CD8-positive, alpha-beta T cell (primary cell): ENCODE measurements at regions of chr2 and their contacts with region 1.

Region 1: DNA sequence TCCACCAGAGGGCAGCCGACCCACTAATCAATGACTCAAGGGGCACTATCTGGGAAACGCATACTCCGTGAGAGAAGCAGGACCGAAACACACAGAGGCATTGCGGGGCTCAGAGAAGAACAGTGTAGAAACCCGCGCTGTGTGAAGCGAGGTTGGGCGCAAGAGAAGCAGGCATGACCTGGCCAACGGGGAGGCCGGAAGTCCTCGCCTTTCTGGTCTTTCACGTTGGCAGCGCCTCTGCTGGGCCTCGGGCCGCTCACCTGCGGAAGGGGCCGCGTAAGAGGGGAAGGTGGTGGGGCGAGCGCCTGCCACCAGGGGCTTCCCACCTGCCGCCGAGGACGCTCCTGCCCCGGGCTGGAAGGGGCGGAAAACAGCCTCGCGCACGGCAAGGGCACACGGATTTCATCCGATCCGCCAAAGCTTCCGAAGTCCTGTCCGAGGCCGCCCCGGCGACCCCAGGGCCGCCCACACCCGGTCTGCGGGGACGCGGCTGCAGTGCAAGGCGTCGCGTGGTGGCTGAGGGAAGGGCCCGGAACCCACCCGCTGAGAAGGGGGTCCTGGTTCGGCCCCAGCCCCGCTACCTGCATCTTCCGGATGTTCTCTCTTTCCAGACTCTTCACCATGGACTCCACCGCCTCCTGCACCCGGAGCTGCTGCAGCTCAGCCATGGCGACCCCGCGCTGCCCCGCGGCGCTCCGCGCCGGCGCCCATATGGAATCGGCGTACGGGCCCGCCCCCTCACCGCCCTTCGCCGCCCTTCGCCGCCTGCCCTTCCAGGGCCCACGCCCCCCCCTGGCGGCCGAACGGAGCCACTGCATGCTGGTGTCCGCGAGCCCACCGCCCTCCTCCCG is at the start of gene FAM136A:
- DNase-seq: peak; percentile 78 to 93 (median 88)
- ATAC-seq: peak; percentile 93
- H3K4me3 ChIP-seq: peak within 1 kb of the TSS; percentile 85 to 94
- H3K4me3 Mint-ChIP-seq: peak within 1 kb of the TSS; percentile 89
- H3K27ac ChIP-seq: peak within 1 kb of the TSS; percentile 77 to 80
- H3K27ac Mint-ChIP-seq: peak within 1 kb of the TSS; percentile 93
- H3K4me1 ChIP-seq: peaks cover 16% of the 10 kb centered on the region
- H3K4me1 Mint-ChIP-seq: peaks cover 29% of the 10 kb centered on the region
- H3K27me3 ChIP-seq: no peaks in the 10 kb centered on the region
- H3K27me3 Mint-ChIP-seq: no peaks in the 10 kb centered on the region
- CTCF ChIP-seq: peak; percentile 87
- total RNA-seq, gene FAM136A: 30.8 to 30.9 TPM

Region 2: DNA sequence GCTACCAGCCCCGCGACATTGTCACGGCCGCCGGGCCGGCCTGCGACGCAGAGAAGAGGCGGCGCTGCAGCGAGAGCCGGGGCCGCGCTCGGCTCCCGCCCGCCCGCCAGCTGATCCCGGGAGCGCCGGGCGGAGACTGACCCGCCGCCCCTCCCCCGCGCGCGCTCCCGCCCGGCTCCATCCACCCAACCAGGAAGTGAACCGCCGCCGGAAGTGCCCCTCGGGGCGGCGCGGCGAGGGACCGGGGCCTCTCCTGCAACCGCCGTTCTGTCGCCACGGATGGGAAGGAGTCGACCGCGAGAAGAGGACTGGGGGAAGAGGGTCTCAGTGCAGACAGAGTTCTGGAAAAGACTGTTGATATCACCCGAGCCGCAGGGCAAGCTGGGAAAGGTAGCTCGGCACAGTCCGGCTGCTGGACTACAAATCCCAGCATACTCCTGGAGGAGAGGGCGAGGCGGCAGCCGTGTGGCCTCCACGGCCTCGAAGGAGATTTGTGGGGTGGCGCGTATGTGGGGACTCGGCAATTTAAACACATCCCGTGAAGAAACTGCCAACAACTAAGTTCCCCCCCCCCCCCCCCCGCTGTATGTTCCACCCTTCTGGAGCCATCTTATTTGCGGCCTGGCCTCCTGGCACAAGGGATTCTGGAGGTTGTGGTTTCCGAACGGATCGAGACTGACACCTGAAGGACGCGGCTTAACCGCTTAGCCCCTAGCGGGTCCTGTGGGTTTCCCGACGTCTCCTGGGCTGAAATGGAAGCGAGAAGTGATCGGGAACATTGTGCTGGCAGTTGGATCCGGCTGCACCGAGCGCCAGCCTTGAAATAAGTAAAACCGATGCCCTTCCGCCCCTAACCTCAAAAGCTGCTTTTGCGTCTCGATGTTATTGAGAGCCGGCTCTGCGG is 657.7 kb before region 1 on chr2 and contains the start of gene AAK1:
- CTCF ChIA-PET with region 1: no interaction called
- POLR2A ChIA-PET with region 1: no interaction called
- intact Hi-C with region 1: loop called in 1 of 2 experiments (anchors 10 kb)
- DNase-seq: peak; percentile 60 to 92 (median 83)
- ATAC-seq: peak; percentile 41
- H3K4me3 ChIP-seq: peak within 1 kb of the TSS; percentile 83 to 95
- H3K4me3 Mint-ChIP-seq: peak within 1 kb of the TSS; percentile 96
- H3K27ac ChIP-seq: peak within 1 kb of the TSS; percentile 58 to 86
- H3K27ac Mint-ChIP-seq: peak within 1 kb of the TSS; percentile 97
- H3K4me1 ChIP-seq: peaks cover 54% of the 10 kb centered on the region
- H3K4me1 Mint-ChIP-seq: peaks cover 65% of the 10 kb centered on the region
- H3K27me3 ChIP-seq: no peaks in the 10 kb centered on the region
- H3K27me3 Mint-ChIP-seq: no peaks in the 10 kb centered on the region
- CTCF ChIP-seq: no peak
- total RNA-seq, gene AAK1: 156 to 174 TPM

Region 3: GRCh38 chr2:69914170-69914960 is 387.2 kb before region 1 on chr2:
- CTCF ChIA-PET with region 1: interaction called, 75 read pairs
- POLR2A ChIA-PET with region 1: interaction called, 5 read pairs
- intact Hi-C with region 1: loop called (anchors 1 kb)
- DNase-seq: peak in 7 of 9 experiments; percentile 99 to 100 (median 100)
- ATAC-seq: peak; percentile 93
- H3K4me3 ChIP-seq: peak overlapping the region; percentile 87 to 89
- H3K4me3 Mint-ChIP-seq: peak overlapping the region; percentile 85
- H3K27ac ChIP-seq: peak overlapping the region; percentile 91 to 97
- H3K27ac Mint-ChIP-seq: peak overlapping the region; percentile 92
- H3K4me1 ChIP-seq: peaks cover 21% of the 10 kb centered on the region
- H3K4me1 Mint-ChIP-seq: peaks cover 30% of the 10 kb centered on the region
- H3K27me3 ChIP-seq: no peaks in the 10 kb centered on the region
- H3K27me3 Mint-ChIP-seq: no peaks in the 10 kb centered on the region
- CTCF ChIP-seq: no peak

Region 4: GRCh38 chr2:70258532-70258874 is 43.1 kb before region 1 on chr2:
- CTCF ChIA-PET with region 1: interaction called, 4 read pairs
- POLR2A ChIA-PET with region 1: interaction called, 6 read pairs
- intact Hi-C with region 1: loop called in 1 of 2 experiments (anchors 2 kb)
- DNase-seq: no peak
- ATAC-seq: no peak
- H3K4me3 ChIP-seq: peak overlapping the region; percentile 62 to 88
- H3K4me3 Mint-ChIP-seq: peak overlapping the region; percentile 86
- H3K27ac ChIP-seq: peak overlapping the region in 1 of 2 experiments; percentile 54
- H3K27ac Mint-ChIP-seq: peak overlapping the region; percentile 77
- H3K4me1 ChIP-seq: peaks cover 15% of the 10 kb centered on the region
- H3K4me1 Mint-ChIP-seq: peaks cover 42% of the 10 kb centered on the region
- H3K27me3 ChIP-seq: no peaks in the 10 kb centered on the region
- H3K27me3 Mint-ChIP-seq: no peaks in the 10 kb centered on the region
- CTCF ChIP-seq: no peak

Region 5: GRCh38 chr2:70627211-70627902 is 325.8 kb after region 1 on chr2:
- CTCF ChIA-PET with region 1: interaction called, 12 read pairs
- POLR2A ChIA-PET with region 1: no interaction called
- intact Hi-C with region 1: no loop called
- DNase-seq: no peak
- ATAC-seq: no peak
- H3K4me3 ChIP-seq: no peak overlapping the region
- H3K4me3 Mint-ChIP-seq: no peak overlapping the region
- H3K27ac ChIP-seq: no peak overlapping the region
- H3K27ac Mint-ChIP-seq: no peak overlapping the region
- H3K4me1 ChIP-seq: no peaks in the 10 kb centered on the region
- H3K4me1 Mint-ChIP-seq: no peaks in the 10 kb centered on the region
- H3K27me3 ChIP-seq: peaks cover 0 to 3% of the 10 kb centered on the region in 2 experiments
- H3K27me3 Mint-ChIP-seq: peaks cover 18% of the 10 kb centered on the region
- CTCF ChIP-seq: no peak

Region 6: GRCh38 chr2:70861777-70862625 is 560.4 kb after region 1 on chr2:
- CTCF ChIA-PET with region 1: interaction called, 3 read pairs
- POLR2A ChIA-PET with region 1: no interaction called
- intact Hi-C with region 1: loop called in 1 of 2 experiments (anchors 10 kb)
- DNase-seq: peak; percentile 43 to 80 (median 71)
- ATAC-seq: peak; percentile 87
- H3K4me3 ChIP-seq: no peak overlapping the region
- H3K4me3 Mint-ChIP-seq: no peak overlapping the region
- H3K27ac ChIP-seq: no peak overlapping the region
- H3K27ac Mint-ChIP-seq: no peak overlapping the region
- H3K4me1 ChIP-seq: peaks cover 3% of the 10 kb centered on the region
- H3K4me1 Mint-ChIP-seq: peaks cover 5% of the 10 kb centered on the region
- H3K27me3 ChIP-seq: peaks cover 2 to 4% of the 10 kb centered on the region in 2 experiments
- H3K27me3 Mint-ChIP-seq: peaks cover 33% of the 10 kb centered on the region
- CTCF ChIP-seq: peak; percentile 73

Region 7: GRCh38 chr2:71068218-71069035 is 766.9 kb after region 1 on chr2 and contains the start of gene NAGK:
- CTCF ChIA-PET with region 1: no interaction called
- POLR2A ChIA-PET with region 1: no interaction called
- intact Hi-C with region 1: loop called in 1 of 2 experiments (anchors 5 kb)
- DNase-seq: peak; percentile 95 to 99 (median 98)
- ATAC-seq: peak; percentile 82
- H3K4me3 ChIP-seq: peak within 1 kb of the TSS; percentile 77 to 87
- H3K4me3 Mint-ChIP-seq: peak within 1 kb of the TSS; percentile 95
- H3K27ac ChIP-seq: peak within 1 kb of the TSS; percentile 86 to 99
- H3K27ac Mint-ChIP-seq: peak within 1 kb of the TSS; percentile 99
- H3K4me1 ChIP-seq: peaks cover 43% of the 10 kb centered on the region
- H3K4me1 Mint-ChIP-seq: peaks cover 63% of the 10 kb centered on the region
- H3K27me3 ChIP-seq: no peaks in the 10 kb centered on the region
- H3K27me3 Mint-ChIP-seq: no peaks in the 10 kb centered on the region
- CTCF ChIP-seq: no peak
- total RNA-seq, gene NAGK: 58.9 to 67.7 TPM